ENCODE measurements at regions of chr12 and their contacts with region 1.

Region 1: GRCh38 chr12:26126340-26127284 is 1.8 kb upstream of the BHLHE41 start:
- DNase-seq: peak; percentile 78 to 80
- ATAC-seq: peak; percentile 61 to 84
- H3K4me3 ChIP-seq: peak overlapping the region; percentile 73
- H3K27ac ChIP-seq: peak overlapping the region; percentile 71 to 78
- H3K4me1 ChIP-seq: peaks cover 17% of the 10 kb centered on the region
- CTCF ChIP-seq: no peak; the same call in 2 of the 3 replicates
- EP300 ChIP-seq: no peak
- POLR2A ChIP-seq: no peak
- RAD21 ChIP-seq: no peak; a peak in 2 of 5 replicates

Region 2: DNA sequence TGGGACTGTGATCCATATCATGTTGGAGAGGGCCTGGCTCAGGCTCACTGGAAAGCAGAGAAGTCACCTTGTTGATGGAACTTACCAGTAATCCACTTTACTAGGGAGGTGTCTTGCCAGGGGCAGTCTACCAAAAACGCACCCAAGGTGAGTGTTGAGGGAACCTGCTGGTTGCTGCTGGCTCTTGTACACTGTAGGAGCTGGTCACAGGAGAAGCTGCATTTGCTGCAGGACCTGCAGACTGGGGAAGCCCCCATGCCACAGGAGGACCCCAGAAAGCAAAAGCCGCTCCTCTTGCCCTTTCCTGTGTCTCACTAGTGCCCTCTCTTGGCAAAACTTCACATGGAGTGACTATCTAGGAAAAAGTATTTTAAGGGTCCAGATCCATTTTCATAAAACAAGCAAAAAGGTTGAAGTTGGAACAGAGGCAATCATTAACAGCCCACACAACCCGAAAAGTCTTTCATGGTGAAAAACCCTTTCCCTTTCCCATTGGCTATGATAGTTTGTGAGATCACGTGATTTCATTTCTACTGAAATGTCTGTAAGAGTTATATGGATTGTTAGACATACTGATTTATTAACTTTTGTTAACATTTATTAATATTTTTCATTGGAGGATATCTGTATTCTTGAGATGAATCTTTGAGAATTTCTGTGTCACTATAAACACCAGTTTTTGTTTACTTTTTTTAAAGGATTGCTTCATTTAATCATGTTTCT is 109.0 kb before region 1 on chr12:
- CTCF ChIA-PET with region 1: no interaction called
- POLR2A ChIA-PET with region 1: no interaction called
- DNase-seq: peak; percentile 21 to 60
- ATAC-seq: peak; percentile 59 to 82
- H3K4me3 ChIP-seq: no peak overlapping the region
- H3K27ac ChIP-seq: 0 out of 6 replicates have a peak overlapping the region, but pooled peaks of 1 of the 2 experiments have one; percentile 26
- H3K4me1 ChIP-seq: no peaks in the 10 kb centered on the region
- CTCF ChIP-seq: peak; percentile 83
- EP300 ChIP-seq: no peak
- POLR2A ChIP-seq: no peak
- RAD21 ChIP-seq: peak; percentile 81 to 85

Region 3: GRCh38 chr12:26113853-26114719 is 12.5 kb before region 1 on chr12:
- CTCF ChIA-PET with region 1: interaction called, 9 read pairs
- POLR2A ChIA-PET with region 1: interaction called, 10 read pairs
- DNase-seq: peak; percentile 73 to 91
- ATAC-seq: peak; percentile 89 to 94
- H3K4me3 ChIP-seq: peak overlapping the region; percentile 53
- H3K27ac ChIP-seq: peak overlapping the region; percentile 80 to 94
- H3K4me1 ChIP-seq: peaks cover 26% of the 10 kb centered on the region
- CTCF ChIP-seq: no peak
- EP300 ChIP-seq: no peak; a peak in 1 of 5 replicates
- POLR2A ChIP-seq: peak; percentile 57
- RAD21 ChIP-seq: no peak

Region 4: GRCh38 chr12:26274441-26275312 is 148.1 kb after region 1 on chr12:
- CTCF ChIA-PET with region 1: interaction called, 110 read pairs
- POLR2A ChIA-PET with region 1: interaction called, 28 read pairs
- DNase-seq: peak; percentile 91 to 98
- ATAC-seq: peak; percentile 96 to 97
- H3K4me3 ChIP-seq: no peak overlapping the region
- H3K27ac ChIP-seq: peak overlapping the region; percentile 80 to 83
- H3K4me1 ChIP-seq: peaks cover 53% of the 10 kb centered on the region
- CTCF ChIP-seq: peak; percentile 49
- EP300 ChIP-seq: peak; percentile 82 to 92; a peak in 3 of 5 replicates
- POLR2A ChIP-seq: no peak
- RAD21 ChIP-seq: peak; percentile 68 to 81

Region 5: DNA sequence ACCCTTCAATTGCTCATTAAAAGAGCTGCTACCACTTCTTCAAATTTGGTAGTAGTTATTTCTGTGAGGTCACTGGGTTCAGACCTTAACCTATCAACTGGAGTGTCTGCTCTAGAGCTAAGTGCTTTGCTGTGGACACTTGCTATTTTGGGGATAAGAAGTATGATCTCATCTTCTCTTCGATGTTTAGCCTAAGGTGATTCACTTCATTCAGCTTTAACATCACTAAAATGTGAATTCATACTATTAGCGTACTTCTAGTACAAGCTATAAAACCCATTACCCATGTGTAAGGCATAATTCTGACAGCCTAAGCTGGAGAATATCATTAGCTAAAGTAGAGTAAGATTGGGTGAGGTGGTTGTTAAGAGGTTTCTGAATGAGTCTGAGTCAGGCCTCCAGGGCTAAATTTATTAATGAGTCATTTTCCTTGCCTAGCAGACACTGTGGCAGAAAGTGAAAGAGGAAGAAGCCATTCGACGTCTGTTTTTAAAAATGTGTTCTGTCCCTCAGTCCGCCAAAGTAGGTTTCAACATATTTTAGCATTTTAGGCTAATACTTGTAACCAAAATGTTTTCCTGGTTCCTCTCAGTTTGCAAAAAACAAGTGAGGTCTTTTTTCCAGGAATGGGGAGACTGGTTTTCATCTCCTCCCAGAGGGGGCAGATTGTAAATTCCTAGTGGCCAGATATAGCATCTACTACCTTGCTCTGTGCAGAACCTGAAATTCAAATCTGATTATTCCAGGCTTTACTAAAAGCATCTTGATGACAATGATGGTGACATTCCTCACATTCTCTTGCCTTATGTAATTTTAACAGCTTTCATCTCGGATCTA is 172.4 kb after region 1 on chr12:
- CTCF ChIA-PET with region 1: interaction called, 15 read pairs
- POLR2A ChIA-PET with region 1: no interaction called
- DNase-seq: peak; percentile 52 to 64
- ATAC-seq: peak; percentile 95
- H3K4me3 ChIP-seq: 0 out of 3 replicates have a peak overlapping the region, but pooled peaks have one; percentile 15
- H3K27ac ChIP-seq: peak overlapping the region; percentile 45 to 71; a peak in 5 of 6 replicates
- H3K4me1 ChIP-seq: peaks cover 13% of the 10 kb centered on the region
- CTCF ChIP-seq: no peak
- EP300 ChIP-seq: no peak
- POLR2A ChIP-seq: no peak
- RAD21 ChIP-seq: no peak; a peak in 1 of 5 replicates

Region 6: GRCh38 chr12:26599096-26599695 is 472.6 kb after region 1 on chr12:
- CTCF ChIA-PET with region 1: no interaction called
- POLR2A ChIA-PET with region 1: no interaction called
- DNase-seq: no peak
- ATAC-seq: no peak
- H3K4me3 ChIP-seq: no peak overlapping the region
- H3K27ac ChIP-seq: no peak overlapping the region
- H3K4me1 ChIP-seq: no peaks in the 10 kb centered on the region
- CTCF ChIP-seq: no peak
- EP300 ChIP-seq: no peak
- POLR2A ChIP-seq: no peak
- RAD21 ChIP-seq: no peak

Region 7: GRCh38 chr12:26614020-26614616 is 487.5 kb after region 1 on chr12:
- CTCF ChIA-PET with region 1: interaction called, 13 read pairs
- POLR2A ChIA-PET with region 1: no interaction called
- DNase-seq: peak in 1 of 2 experiments; percentile 49
- ATAC-seq: peak in 1 of 2 experiments; percentile 82; a peak in 3 of 6 replicates
- H3K4me3 ChIP-seq: no peak overlapping the region
- H3K27ac ChIP-seq: no peak overlapping the region
- H3K4me1 ChIP-seq: no peaks in the 10 kb centered on the region
- CTCF ChIP-seq: peak; percentile 53; the same call in 2 of the 3 replicates
- EP300 ChIP-seq: no peak
- POLR2A ChIP-seq: no peak
- RAD21 ChIP-seq: peak; percentile 56 to 77

Region 8: GRCh38 chr12:26651566-26652188 is 525.1 kb after region 1 on chr12:
- CTCF ChIA-PET with region 1: interaction called, 49 read pairs
- POLR2A ChIA-PET with region 1: no interaction called
- DNase-seq: peak; percentile 69 to 71
- ATAC-seq: peak; percentile 47 to 84; a peak in 4 of 6 replicates
- H3K4me3 ChIP-seq: no peak overlapping the region
- H3K27ac ChIP-seq: no peak overlapping the region
- H3K4me1 ChIP-seq: peaks cover 13% of the 10 kb centered on the region
- CTCF ChIP-seq: peak; percentile 76
- EP300 ChIP-seq: no peak
- POLR2A ChIP-seq: no peak
- RAD21 ChIP-seq: peak; percentile 86 to 94

Region 9: DNA sequence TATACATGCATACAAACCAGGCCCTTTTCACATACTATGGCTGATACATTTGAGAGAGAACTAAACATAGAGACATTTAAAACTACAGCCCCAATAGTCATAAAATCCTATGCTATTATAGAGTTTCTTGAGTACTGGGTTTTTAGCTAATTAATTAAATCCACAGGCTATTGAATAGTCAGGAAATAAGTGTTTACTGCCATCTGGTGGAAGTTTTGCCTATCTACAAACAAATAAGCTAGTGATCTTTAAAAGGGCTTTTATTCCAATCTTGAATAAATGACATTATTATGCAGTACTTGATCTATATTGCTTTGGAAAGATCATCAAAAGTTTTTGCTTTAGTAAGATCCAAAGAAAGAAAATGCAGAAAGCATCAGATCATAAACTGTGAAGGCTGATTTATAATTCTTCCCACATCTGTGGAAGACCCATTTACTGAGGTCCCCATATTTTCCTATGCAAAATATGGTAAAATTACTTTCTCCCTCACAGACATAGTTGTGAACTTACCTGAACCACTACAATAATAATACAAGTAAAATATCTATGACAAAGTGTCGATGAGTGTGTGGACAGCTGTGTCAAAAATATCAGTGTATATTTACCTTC is 575.1 kb after region 1 on chr12:
- CTCF ChIA-PET with region 1: interaction called, 15 read pairs
- POLR2A ChIA-PET with region 1: no interaction called
- DNase-seq: peak; percentile 16 to 58
- ATAC-seq: peak; percentile 39 to 72; a peak in 3 of 6 replicates
- H3K4me3 ChIP-seq: no peak overlapping the region
- H3K27ac ChIP-seq: no peak overlapping the region
- H3K4me1 ChIP-seq: peaks cover 24% of the 10 kb centered on the region
- CTCF ChIP-seq: peak; percentile 86
- EP300 ChIP-seq: no peak
- POLR2A ChIP-seq: no peak
- RAD21 ChIP-seq: peak; percentile 79 to 88

Measured in A549 (cell line).